ENCODE measurements at regions of chr3 and their contacts with region 1.

Region 1: DNA sequence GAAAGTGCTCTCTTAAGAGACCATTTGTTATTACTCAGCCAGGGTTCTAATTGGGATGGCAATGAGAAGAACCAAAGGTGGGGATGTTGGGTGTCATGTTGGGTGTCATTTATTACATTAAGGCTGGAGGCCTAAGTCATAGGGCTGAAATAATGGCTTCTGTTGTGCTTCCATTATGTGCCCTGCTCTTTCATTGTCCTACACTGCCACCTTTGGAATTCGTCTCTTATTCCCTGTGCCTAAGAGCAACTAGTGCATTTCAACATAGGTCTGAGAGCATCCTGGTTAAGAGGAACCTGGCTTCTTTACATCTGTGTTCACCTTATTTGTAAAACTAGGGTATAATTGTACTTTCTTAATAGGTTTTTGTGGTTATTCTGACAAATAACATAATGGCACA is 32.2 kb downstream of the RIOX2 start:
- DNase-seq: no peak
- H3K4me3 Mint-ChIP-seq: no peak overlapping the region
- H3K27ac Mint-ChIP-seq: no peak overlapping the region
- H3K4me1 Mint-ChIP-seq: peaks cover 15% of the 10 kb centered on the region
- H3K27me3 Mint-ChIP-seq: no peaks in the 10 kb centered on the region

Region 2: GRCh38 chr3:97793420-97794019 is 146.5 kb before region 1 on chr3:
- intact Hi-C with region 1: loop called (anchors 1 kb)
- DNase-seq: no peak
- H3K4me3 Mint-ChIP-seq: no peak overlapping the region
- H3K27ac Mint-ChIP-seq: no peak overlapping the region
- H3K4me1 Mint-ChIP-seq: peaks cover 2% of the 10 kb centered on the region
- H3K27me3 Mint-ChIP-seq: no peaks in the 10 kb centered on the region

Region 3: GRCh38 chr3:97927654-97928053 is 12.4 kb before region 1 on chr3:
- intact Hi-C with region 1: loop called (anchors 2 kb)
- DNase-seq: no peak
- H3K4me3 Mint-ChIP-seq: no peak overlapping the region
- H3K27ac Mint-ChIP-seq: no peak overlapping the region
- H3K4me1 Mint-ChIP-seq: no peaks in the 10 kb centered on the region
- H3K27me3 Mint-ChIP-seq: no peaks in the 10 kb centered on the region

Region 4: DNA sequence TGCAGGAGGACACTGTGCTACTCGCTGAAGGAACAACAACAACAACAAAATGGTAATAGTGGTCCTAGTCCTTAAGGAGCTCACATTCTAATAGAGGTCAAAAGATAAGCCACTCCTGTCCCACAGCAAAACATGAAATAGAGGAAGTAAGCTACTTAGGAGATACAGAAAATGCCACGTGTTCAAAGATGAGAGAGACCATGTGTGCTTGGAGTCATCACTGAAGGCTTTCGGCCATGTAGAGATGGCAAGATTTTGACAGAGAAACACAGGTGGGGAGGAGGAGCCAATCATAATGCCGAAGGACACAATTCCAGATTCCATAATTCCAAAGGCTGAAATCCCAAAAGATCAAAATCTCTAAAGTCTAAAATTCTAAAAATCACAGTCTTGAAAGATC is 57.0 kb after region 1 on chr3:
- intact Hi-C with region 1: no loop called
- DNase-seq: no peak
- H3K4me3 Mint-ChIP-seq: no peak overlapping the region
- H3K27ac Mint-ChIP-seq: no peak overlapping the region
- H3K4me1 Mint-ChIP-seq: peaks cover 9% of the 10 kb centered on the region
- H3K27me3 Mint-ChIP-seq: peaks cover 8% of the 10 kb centered on the region

Region 5: GRCh38 chr3:98350082-98350481 is 410.0 kb after region 1 on chr3:
- intact Hi-C with region 1: no loop called
- DNase-seq: no peak
- H3K4me3 Mint-ChIP-seq: no peak overlapping the region
- H3K27ac Mint-ChIP-seq: no peak overlapping the region
- H3K4me1 Mint-ChIP-seq: peaks cover 10% of the 10 kb centered on the region
- H3K27me3 Mint-ChIP-seq: peaks cover 38% of the 10 kb centered on the region

Measured in activated T-helper 2 cell treated with anti-CD3 and anti-CD28 coated beads, Interferon-gamma antibody, Interleukin-2, Interleukin-4, amounts not matched to agents 10 μg/mL and 5 μg/mL and 100 μg/mL, durations not matched to agents 14 hours and 24 hours and 36 hours (primary cell).